ENCODE measurements at regions of chr1 and their contacts with region 1.

Region 1: GRCh38 chr1:236281654-236282424 is at the start of gene ERO1B:
- DNase-seq: peak; percentile 97 to 100 (median 98)
- ATAC-seq: peak; percentile 98
- H3K4me3 ChIP-seq: peak within 1 kb of the TSS; percentile 79
- H3K27ac ChIP-seq: peak within 1 kb of the TSS; percentile 74
- H3K4me1 ChIP-seq: peaks cover 13 to 23% of the 10 kb centered on the region in 2 experiments; a peak in 4 of 5 replicates
- H3K27me3 ChIP-seq: no peaks in the 10 kb centered on the region
- CTCF ChIP-seq: peak in 1 of 3 experiments; percentile 7; a peak in 1 of 6 replicates
- EP300 ChIP-seq: no peak
- POLR2A ChIP-seq: peak; percentile 87
- RAD21 ChIP-seq: no peak
- polyA plus RNA-seq, gene ERO1B: 2.3 TPM

Region 2: DNA sequence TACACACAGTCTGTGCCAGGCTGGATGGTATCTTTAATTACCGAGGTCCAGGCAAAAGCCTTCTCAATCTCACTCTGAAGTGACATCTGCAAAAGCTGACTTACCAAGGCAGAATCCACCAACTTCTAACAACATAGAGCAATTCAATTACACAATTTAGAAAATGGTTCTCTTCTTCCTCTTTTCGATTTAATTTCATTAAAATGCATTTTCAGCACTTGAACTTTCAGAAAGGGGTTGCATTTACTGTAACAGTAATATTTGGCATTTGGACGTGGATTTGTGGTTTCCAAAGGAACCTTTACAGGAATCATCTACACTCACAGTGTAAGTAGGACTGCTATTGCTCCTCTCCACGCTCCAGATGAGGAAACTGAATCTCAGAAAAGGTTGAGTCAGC is 53.4 kb before region 1 on chr1:
- CTCF ChIA-PET with region 1: no interaction called
- POLR2A ChIA-PET with region 1: no interaction called
- in situ Hi-C with region 1: no loop called
- intact Hi-C with region 1: no loop called
- DNase-seq: no peak
- ATAC-seq: no peak
- H3K4me3 ChIP-seq: no peak overlapping the region
- H3K27ac ChIP-seq: no peak overlapping the region
- H3K4me1 ChIP-seq: no peaks in the 10 kb centered on the region
- H3K27me3 ChIP-seq: no peaks in the 10 kb centered on the region
- CTCF ChIP-seq: no peak
- EP300 ChIP-seq: no peak
- POLR2A ChIP-seq: no peak
- RAD21 ChIP-seq: no peak

Region 3: DNA sequence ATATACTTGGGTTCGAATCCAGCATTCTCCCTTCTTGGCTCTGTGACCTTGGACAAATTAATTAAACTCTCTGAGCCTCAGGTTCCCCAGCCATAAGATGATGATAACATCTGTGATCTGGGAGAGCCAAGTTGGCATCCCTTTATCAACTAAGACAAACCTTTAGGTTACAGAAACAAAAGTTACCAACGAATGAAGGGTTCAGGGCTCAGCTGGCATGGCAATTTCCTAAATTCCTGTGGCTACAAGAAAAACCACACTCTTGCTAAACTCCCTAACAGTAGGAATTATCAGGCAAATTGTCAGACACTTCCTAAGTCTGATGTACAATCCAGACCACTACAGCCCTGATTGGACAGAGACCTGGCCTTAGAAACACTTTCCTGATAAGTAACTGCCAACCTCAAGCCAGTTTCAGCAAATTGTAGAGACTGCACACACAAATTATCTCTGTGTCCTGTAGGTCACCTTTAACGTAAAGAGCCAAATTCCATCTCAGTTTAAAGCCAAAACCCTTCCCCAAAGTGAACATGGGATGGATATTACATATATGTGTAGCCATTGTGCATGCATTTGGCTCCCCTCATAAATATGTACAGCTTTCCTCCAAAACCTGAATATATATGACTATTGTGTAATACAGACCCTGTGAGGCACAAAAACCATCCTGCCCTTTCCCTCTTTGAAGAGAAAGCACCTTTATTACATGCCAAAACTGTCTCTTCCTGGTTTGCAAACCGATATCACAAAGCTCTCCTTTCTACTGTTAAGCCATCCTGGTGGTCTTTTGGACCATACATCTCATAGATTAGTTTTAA is 72.7 kb after region 1 on chr1:
- CTCF ChIA-PET with region 1: no interaction called
- POLR2A ChIA-PET with region 1: interaction called, 6 read pairs
- in situ Hi-C with region 1: no loop called
- intact Hi-C with region 1: loop called (anchors 5 kb)
- DNase-seq: peak in 2 of 4 experiments; percentile 66 to 74
- ATAC-seq: peak; percentile 22
- H3K4me3 ChIP-seq: no peak overlapping the region
- H3K27ac ChIP-seq: peak overlapping the region; percentile 47; the same call in 2 of the 3 replicates
- H3K4me1 ChIP-seq: peaks cover 28 to 55% of the 10 kb centered on the region in 2 experiments
- H3K27me3 ChIP-seq: no peaks in the 10 kb centered on the region
- CTCF ChIP-seq: no peak
- EP300 ChIP-seq: peak; percentile 54; the same call in 1 of the 2 replicates
- POLR2A ChIP-seq: 0 out of 2 replicates have a peak, but pooled peaks have one; percentile 20
- RAD21 ChIP-seq: no peak